ENCODE measurements at regions of chr3 and their contacts with region 1.

Region 1: DNA sequence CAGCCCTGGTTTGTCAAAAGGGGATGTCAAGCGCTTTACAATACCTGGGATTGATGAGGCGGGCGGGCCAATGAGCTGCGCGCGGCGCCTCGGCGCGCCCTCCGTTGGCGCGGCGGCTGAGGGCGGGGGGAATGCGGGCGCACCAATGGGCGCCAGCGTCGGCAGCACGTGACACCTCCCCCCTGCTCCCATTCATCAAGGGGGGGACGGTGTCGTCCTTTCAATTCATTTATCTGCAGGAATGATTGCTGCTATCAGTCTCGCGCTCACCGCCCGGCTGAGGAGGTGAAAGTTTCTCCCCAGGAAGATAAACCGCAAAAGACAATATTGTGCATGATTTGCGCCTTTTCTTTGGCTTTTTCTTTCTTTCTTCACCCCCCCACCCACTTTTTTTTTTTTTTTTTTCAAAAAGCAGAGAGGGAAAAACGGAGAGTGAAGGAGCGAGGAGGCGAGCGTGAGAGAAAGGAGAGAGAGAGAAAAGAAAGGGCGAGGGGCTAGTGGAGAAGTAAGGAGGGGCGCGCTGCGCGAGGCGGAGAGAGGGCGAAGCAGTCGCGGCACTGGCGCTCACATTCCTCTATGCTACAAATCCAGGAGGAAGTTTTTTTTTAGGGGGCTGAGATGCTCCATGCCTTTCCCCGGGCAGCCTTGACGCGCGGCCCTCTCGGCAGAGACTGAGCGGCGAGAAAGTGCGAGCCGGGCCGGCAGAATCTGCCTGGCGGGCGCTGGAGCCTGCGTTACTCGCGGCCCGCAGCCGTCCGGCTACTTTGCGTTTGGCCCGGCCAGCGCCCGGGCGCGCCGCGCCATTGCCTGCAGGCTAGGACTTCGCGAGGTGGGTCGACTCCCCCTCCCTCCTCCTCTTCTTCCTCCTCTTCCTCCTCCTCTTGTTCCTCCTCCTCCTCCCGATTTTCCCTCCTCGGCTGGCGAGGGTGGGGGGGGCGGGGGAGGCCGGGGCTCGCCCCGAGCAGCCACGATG is at the start of gene ZIC1:
- DNase-seq: no peak
- ATAC-seq: no peak
- H3K4me3 Mint-ChIP-seq: no peak within 1 kb of the TSS
- H3K27ac Mint-ChIP-seq: no peak within 1 kb of the TSS
- H3K4me1 Mint-ChIP-seq: peaks cover 31% of the 10 kb centered on the region
- H3K27me3 Mint-ChIP-seq: peaks cover 65% of the 10 kb centered on the region
- CTCF ChIP-seq: no peak
- total RNA-seq, gene ZIC1: not detected in 2 replicates

Region 2: DNA sequence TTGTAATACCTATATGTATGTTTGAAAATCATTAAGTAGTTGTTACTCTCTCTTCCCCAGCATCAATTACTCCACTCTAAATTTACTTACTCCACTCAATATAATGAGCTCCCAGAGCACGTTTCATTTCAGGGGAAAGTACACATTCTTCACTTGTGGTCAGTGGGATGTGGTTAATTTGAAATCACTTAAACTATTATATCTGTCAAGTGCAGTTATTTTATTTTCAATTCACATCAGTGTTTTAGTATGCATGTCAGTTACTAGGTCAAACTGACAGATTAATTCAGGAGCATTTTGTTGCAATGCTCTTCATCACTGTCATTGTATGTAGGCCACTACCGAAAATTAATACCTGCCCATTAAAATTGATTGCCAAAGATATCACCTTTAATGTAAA is 379.2 kb before region 1 on chr3:
- CTCF ChIA-PET with region 1: no interaction called
- POLR2A ChIA-PET with region 1: no interaction called
- intact Hi-C with region 1: no loop called
- DNase-seq: no peak
- ATAC-seq: no peak
- H3K4me3 Mint-ChIP-seq: no peak overlapping the region
- H3K27ac Mint-ChIP-seq: no peak overlapping the region
- H3K4me1 Mint-ChIP-seq: no peaks in the 10 kb centered on the region
- H3K27me3 Mint-ChIP-seq: no peaks in the 10 kb centered on the region
- CTCF ChIP-seq: no peak

Region 3: GRCh38 chr3:147257944-147258343 is 151.5 kb before region 1 on chr3:
- CTCF ChIA-PET with region 1: no interaction called
- POLR2A ChIA-PET with region 1: no interaction called
- intact Hi-C with region 1: no loop called
- DNase-seq: no peak
- ATAC-seq: no peak
- H3K4me3 Mint-ChIP-seq: no peak overlapping the region
- H3K27ac Mint-ChIP-seq: no peak overlapping the region
- H3K4me1 Mint-ChIP-seq: no peaks in the 10 kb centered on the region
- H3K27me3 Mint-ChIP-seq: no peaks in the 10 kb centered on the region
- CTCF ChIP-seq: no peak

Region 4: DNA sequence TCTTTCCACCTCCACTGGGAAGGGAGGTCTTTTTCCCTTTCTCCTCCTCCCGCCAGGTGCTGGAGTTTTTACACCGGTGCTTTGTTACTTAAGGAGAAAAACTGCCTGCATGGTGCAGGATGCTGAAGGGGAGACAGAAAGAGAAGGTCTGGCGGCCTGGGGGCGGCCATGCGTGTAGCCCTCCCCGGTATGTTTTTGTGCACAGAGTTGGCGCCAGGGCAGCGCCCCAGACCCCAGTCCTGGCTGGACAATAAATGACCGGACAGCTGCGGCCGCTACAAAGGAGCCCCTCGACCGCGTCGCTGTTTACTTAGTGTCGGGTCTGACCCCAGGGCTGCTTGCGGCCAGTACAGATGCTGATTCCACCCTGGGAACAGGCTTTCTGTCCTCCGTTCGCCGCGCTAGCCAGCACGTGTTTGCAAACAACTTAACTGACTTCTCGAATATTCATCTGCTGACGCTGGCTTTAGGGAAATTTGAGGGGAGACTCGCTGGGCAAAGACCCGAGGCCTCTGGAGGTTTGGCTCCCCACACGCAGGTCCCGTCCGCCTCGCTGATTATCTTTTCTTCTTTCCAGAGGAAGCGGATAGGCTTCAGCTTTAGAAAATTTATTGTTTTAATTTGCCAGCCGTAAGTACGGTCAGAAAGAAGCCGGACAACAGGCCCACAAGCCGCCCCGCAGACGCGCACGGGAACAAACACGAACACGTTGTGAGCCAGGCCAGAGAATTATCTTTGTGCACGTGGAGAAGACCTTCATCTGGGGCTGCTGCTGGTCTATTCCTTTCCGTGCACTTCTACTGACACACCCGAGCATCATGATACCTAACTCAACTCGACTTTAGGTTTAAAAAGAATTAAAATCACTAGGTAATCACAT is 50.0 kb before region 1 on chr3:
- CTCF ChIA-PET with region 1: no interaction called
- POLR2A ChIA-PET with region 1: interaction called, 10 read pairs
- intact Hi-C with region 1: no loop called
- DNase-seq: no peak
- ATAC-seq: no peak
- H3K4me3 Mint-ChIP-seq: no peak overlapping the region
- H3K27ac Mint-ChIP-seq: no peak overlapping the region
- H3K4me1 Mint-ChIP-seq: no peaks in the 10 kb centered on the region
- H3K27me3 Mint-ChIP-seq: peaks cover 74% of the 10 kb centered on the region
- CTCF ChIP-seq: no peak

Region 5: DNA sequence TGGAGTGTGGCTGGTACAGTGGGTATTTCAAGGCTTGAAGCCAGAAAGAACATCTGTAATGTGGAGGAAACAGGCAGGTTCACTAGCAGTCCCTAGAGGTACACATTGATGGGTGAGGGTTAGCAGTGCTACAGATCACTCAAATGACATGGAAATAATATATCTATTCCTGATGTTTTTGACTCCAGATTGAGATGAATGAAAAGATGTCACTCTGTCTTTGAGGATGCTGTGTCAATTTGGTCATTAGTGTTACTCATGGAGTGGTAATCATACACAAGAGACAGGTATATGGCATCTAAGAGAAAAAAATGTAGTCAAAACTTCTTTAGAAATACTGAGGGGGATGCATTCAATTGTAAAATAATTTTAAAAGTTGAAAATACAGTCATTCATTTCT is 134.9 kb after region 1 on chr3:
- CTCF ChIA-PET with region 1: no interaction called
- POLR2A ChIA-PET with region 1: no interaction called
- intact Hi-C with region 1: no loop called
- DNase-seq: no peak
- ATAC-seq: no peak
- H3K4me3 Mint-ChIP-seq: no peak overlapping the region
- H3K27ac Mint-ChIP-seq: no peak overlapping the region
- H3K4me1 Mint-ChIP-seq: no peaks in the 10 kb centered on the region
- H3K27me3 Mint-ChIP-seq: no peaks in the 10 kb centered on the region
- CTCF ChIP-seq: no peak